ENCODE measurements at regions of chr7 and their contacts with region 1.

Region 1: DNA sequence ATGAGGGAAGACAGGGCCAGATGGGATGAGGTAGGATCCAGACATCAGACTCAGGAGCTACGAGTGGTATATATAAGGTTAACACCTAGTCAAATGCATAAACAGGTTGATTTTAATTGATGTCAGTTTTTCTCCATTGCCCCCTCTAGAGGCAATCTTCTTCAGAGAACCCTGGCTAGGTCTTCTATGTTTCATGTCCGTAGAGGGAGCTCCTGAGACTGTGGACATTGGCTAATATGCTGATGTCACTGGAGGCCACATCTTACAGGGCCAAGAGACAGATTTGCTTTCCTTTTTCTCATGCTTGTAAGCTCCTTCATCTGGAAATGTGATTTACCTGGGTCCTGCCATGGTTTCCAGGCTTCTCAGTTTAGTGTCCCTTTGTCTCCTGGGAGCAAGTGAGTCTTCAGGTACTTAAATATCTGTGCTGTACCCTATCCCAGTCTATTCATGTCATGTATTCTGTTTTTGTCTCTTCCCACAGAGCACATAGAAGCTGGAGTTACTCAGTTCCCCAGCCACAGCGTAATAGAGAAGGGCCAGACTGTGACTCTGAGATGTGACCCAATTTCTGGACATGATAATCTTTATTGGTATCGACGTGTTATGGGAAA is 161.6 kb upstream of the PRSS1 start:
- DNase-seq: no peak
- ATAC-seq: peak; percentile 98
- H3K4me3 Mint-ChIP-seq: no peak overlapping the region
- H3K27ac Mint-ChIP-seq: no peak overlapping the region
- H3K4me1 Mint-ChIP-seq: peaks cover 10% of the 10 kb centered on the region
- H3K27me3 Mint-ChIP-seq: no peaks in the 10 kb centered on the region; the same call in 1 of the 2 replicates
- CTCF ChIP-seq: no peak

Region 2: GRCh38 chr7:142231716-142232115 is 356.0 kb before region 1 on chr7:
- CTCF ChIA-PET with region 1: no interaction called
- POLR2A ChIA-PET with region 1: no interaction called
- DNase-seq: peak; percentile 77
- ATAC-seq: peak; percentile 100
- H3K4me3 Mint-ChIP-seq: no peak overlapping the region; the same call in 1 of the 2 replicates
- H3K27ac Mint-ChIP-seq: no peak overlapping the region
- H3K4me1 Mint-ChIP-seq: peaks cover 15% of the 10 kb centered on the region
- H3K27me3 Mint-ChIP-seq: peaks cover 5% of the 10 kb centered on the region
- CTCF ChIP-seq: peak; percentile 29; the same call in 1 of the 2 replicates

Region 3: GRCh38 chr7:142516038-142516501 is 71.6 kb before region 1 on chr7:
- CTCF ChIA-PET with region 1: interaction called, 15 read pairs
- POLR2A ChIA-PET with region 1: no interaction called
- DNase-seq: peak; percentile 26
- ATAC-seq: peak; percentile 92
- H3K4me3 Mint-ChIP-seq: no peak overlapping the region
- H3K27ac Mint-ChIP-seq: no peak overlapping the region
- H3K4me1 Mint-ChIP-seq: peaks cover 9% of the 10 kb centered on the region
- H3K27me3 Mint-ChIP-seq: peaks cover 5% of the 10 kb centered on the region; the same call in 1 of the 2 replicates
- CTCF ChIP-seq: peak; percentile 41; the same call in 1 of the 2 replicates

Region 4: DNA sequence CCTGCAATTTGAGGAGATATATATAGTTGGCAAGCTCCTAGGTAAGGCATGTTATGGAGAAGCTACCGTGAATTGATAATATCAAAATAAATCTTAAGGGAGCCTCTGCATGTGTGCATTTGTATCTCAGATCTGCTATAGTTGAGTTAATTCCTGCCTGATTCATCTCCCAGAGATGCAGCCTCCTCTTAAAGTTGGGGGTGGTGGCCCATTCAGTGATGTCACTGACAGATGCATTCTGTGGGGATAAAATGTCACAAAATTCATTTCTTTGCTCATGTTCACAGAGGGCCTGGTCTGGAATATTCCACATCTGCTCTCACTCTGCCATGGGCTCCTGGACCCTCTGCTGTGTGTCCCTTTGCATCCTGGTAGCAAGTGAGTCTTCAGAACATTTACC is 24.2 kb before region 1 on chr7:
- CTCF ChIA-PET with region 1: interaction called, 55 read pairs
- POLR2A ChIA-PET with region 1: no interaction called
- DNase-seq: no peak
- ATAC-seq: no peak
- H3K4me3 Mint-ChIP-seq: no peak overlapping the region
- H3K27ac Mint-ChIP-seq: no peak overlapping the region
- H3K4me1 Mint-ChIP-seq: no peaks in the 10 kb centered on the region
- H3K27me3 Mint-ChIP-seq: peaks cover 3% of the 10 kb centered on the region
- CTCF ChIP-seq: no peak

Region 5: GRCh38 chr7:142598297-142598696 is 10.6 kb after region 1 on chr7:
- CTCF ChIA-PET with region 1: interaction called, 22 read pairs
- POLR2A ChIA-PET with region 1: no interaction called
- DNase-seq: no peak
- ATAC-seq: no peak
- H3K4me3 Mint-ChIP-seq: no peak overlapping the region
- H3K27ac Mint-ChIP-seq: no peak overlapping the region
- H3K4me1 Mint-ChIP-seq: no peaks in the 10 kb centered on the region
- H3K27me3 Mint-ChIP-seq: no peaks in the 10 kb centered on the region; the same call in 1 of the 2 replicates
- CTCF ChIP-seq: no peak

Region 6: GRCh38 chr7:142603870-142604448 is 16.3 kb after region 1 on chr7:
- CTCF ChIA-PET with region 1: interaction called, 22 read pairs
- POLR2A ChIA-PET with region 1: no interaction called
- DNase-seq: peak; percentile 60
- ATAC-seq: peak; percentile 55
- H3K4me3 Mint-ChIP-seq: no peak overlapping the region
- H3K27ac Mint-ChIP-seq: no peak overlapping the region
- H3K4me1 Mint-ChIP-seq: 0 out of 2 replicates have a peak, but pooled peaks cover 2% of the 10 kb centered on the region
- H3K27me3 Mint-ChIP-seq: no peaks in the 10 kb centered on the region; the same call in 1 of the 2 replicates
- CTCF ChIP-seq: peak; percentile 42; the same call in 1 of the 2 replicates